AG04450 (cell line): ENCODE measurements at regions of chr14 and their contacts with region 1.

Region 1: DNA sequence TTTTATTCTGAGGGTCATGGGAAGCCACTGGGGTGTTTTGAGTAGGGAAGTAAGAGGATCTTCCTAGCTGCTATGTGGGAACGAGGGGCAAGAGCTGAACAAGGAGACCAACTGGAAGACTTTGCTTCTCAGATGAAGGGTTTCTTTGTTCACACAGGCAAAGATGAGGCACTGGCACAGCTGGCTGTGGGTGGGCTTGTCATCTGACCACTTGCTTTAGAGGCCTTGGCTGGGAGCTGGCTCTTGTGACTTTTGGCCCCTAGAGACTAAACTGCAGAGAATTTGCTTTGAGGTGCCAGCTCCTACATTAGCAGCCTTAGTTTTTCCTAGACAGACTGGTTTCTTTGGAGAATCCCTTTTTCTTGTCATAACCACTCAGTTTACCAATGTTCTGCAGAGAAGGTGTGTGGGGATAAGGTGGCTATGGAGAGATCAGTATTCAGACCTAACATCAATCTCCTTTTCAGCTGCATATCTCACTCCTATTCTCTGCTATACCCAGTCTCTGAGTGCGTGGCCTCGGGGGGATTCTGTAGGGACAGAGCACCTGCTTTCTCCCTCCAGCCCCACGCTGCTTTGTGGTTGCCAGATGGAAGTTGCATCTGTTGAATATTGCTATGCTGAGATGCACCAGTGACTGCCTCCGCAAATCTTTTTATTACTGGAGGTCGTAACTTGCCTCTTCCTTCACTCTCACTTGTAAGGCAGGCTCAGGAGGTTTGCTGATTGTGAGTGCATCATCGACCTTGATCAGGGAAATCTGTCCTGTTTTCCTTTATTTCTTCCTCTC is 12.7 kb downstream of the PPP2R5C start:
- DNase-seq: no peak
- H3K4me3 ChIP-seq: no peak overlapping the region
- H3K27ac ChIP-seq: no peak overlapping the region
- H3K27me3 ChIP-seq: peaks cover 5% of the 10 kb centered on the region
- CTCF ChIP-seq: no peak

Region 2: DNA sequence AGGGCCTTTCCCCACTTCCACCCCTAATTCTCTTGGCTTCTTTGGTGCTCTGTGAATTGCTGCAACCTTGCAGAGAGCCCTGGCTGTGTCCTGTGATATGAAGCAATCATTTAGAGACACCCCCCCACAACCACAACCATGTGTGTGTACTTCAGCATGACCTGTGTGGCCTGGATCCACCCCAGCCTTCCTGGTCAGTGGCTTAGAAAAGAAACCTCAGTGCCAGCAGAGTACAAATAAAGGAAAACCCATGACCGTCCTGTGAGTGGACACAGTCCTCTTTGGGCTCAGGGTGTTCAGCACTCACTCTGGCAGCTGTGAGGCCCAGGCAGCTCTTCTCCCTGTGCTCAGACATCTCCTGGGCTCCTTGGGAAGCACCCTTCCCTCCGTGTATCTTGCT is 419.5 kb before region 1 on chr14:
- CTCF ChIA-PET with region 1: no interaction called
- POLR2A ChIA-PET with region 1: no interaction called
- DNase-seq: no peak
- H3K4me3 ChIP-seq: no peak overlapping the region
- H3K27ac ChIP-seq: no peak overlapping the region
- H3K27me3 ChIP-seq: peaks cover 13% of the 10 kb centered on the region
- CTCF ChIP-seq: no peak

Region 3: DNA sequence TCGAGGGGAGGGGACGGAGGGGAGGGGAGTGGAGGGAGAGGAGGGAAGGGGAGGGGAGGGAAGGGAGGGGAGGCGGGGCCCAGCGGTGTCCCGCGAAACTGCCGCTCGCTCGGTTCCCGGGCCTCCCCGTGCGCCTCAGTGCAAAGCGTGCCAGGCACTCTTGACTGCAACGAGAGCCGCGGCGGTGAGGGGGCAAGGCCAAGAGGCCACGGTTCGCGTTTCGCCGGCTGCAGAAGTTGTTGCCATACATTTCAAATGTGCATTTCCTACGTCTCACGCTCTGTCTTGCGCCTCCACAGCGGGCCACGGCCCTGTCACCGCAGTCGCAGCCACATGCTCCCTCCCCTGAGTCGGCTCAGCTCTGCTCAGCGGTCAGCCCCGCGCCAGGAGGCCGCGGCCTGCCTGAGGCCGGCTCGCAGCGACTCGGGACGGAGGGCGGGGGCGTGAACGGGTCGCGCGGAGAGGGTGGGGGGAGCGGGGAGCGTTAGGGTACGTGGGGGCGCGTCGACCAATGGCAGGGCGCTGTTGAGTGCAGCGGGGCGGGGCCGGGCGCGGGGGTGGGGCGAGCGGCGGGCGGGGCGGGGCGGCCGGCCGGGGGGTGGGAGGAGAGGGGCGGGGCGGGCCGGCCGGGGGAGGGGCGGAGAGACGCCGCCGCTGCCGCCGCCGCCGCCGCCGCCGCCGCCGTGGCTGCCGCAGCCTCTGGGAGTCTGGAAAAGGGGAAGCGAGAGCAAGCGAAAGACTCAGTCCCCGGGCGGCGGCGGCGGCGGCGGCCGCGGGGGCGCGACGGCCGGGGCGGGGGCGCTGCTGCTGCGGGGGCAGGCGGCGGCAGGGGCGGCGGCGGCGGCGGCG is 12.9 kb before region 1 on chr14 and contains the start of gene PPP2R5C:
- CTCF ChIA-PET with region 1: interaction called, 13 read pairs
- POLR2A ChIA-PET with region 1: no interaction called
- DNase-seq: peak; percentile 68
- H3K4me3 ChIP-seq: peak within 1 kb of the TSS; percentile 97
- H3K27ac ChIP-seq: peak within 1 kb of the TSS; percentile 65
- H3K27me3 ChIP-seq: peaks cover 7% of the 10 kb centered on the region
- CTCF ChIP-seq: no peak
- polyA plus RNA-seq, gene PPP2R5C: 108 and 140 TPM in 2 replicates

Region 4: GRCh38 chr14:101791919-101792572 is 17.8 kb after region 1 on chr14:
- CTCF ChIA-PET with region 1: interaction called, 21 read pairs
- POLR2A ChIA-PET with region 1: no interaction called
- DNase-seq: peak; percentile 27
- H3K4me3 ChIP-seq: peak overlapping the region; percentile 33
- H3K27ac ChIP-seq: no peak overlapping the region
- H3K27me3 ChIP-seq: no peaks in the 10 kb centered on the region
- CTCF ChIP-seq: no peak

Region 5: DNA sequence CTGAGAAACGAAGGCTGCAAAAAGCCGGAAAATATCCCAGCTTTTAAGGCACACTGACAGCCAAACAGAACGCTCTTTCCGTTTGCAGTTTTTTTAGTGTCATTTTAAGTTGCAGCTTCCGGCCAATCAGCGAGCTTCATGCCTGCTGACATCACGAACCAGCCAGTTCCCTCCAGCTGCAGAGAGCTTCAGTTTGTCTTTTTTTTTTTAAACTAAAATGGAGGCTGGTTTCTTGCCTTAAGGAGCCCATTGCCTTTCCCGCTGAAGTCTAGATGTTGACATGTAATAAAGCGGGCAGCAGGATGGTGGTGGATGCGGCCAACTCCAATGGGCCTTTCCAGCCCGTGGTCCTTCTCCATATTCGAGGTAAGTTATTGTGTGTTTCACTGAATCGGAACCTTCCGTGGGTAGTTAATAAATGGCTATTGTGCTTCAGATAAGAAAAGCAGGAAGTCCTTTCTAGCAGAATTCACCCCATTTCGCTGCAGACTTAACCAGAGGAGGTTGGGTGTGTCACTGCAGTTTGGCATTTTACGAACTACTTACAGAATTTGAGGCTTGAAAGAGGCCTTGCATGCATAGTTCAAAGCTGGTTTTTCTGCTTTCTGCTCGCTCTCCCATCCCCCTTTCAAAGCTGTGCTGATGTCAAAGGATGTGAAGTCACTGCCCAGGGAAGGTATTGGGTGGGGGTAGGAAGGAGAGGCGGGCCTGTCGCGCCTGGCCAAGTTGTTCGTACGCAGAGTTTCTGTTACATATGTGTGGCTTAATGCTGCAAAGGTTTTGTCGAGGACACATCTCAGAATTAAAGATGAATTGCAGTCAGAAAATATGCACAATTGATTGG is 35.7 kb after region 1 on chr14:
- CTCF ChIA-PET with region 1: interaction called, 7 read pairs
- POLR2A ChIA-PET with region 1: interaction called, 12 read pairs
- DNase-seq: peak; percentile 79
- H3K4me3 ChIP-seq: peak overlapping the region; percentile 88
- H3K27ac ChIP-seq: peak overlapping the region; percentile 99
- H3K27me3 ChIP-seq: no peaks in the 10 kb centered on the region
- CTCF ChIP-seq: no peak

Region 6: DNA sequence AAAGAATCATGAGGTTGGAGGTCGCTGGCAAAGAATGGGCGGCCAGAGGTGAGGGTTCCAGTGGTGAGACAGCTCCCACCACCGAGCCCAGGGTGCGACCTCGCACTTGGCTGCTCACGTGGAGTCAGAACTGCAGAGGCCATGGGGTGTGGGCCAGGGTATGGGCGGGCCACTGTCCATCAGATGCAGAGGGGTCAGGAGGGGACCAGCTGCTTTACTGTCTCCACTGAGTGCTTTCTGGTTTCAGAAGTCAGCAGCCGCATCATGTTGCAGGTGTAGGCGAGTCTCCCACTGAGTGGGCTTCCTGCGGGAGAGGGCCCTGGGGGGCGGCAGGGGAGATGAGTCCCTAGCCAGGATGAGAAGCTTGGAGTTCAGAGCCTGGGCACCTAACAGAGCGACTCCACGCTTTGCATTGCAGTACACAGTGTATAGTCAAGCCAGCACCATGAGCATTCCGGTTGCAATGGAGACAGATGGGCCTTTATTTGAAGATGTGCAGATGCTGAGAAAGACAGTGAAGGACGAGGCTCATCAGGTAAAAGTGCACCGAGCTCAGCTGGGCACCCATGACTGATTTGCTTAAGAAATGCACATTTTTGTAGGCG is 143.3 kb after region 1 on chr14:
- CTCF ChIA-PET with region 1: interaction called, 14 read pairs
- POLR2A ChIA-PET with region 1: no interaction called
- DNase-seq: no peak
- H3K4me3 ChIP-seq: no peak overlapping the region
- H3K27ac ChIP-seq: peak overlapping the region; percentile 21
- H3K27me3 ChIP-seq: no peaks in the 10 kb centered on the region
- CTCF ChIP-seq: no peak

Region 7: DNA sequence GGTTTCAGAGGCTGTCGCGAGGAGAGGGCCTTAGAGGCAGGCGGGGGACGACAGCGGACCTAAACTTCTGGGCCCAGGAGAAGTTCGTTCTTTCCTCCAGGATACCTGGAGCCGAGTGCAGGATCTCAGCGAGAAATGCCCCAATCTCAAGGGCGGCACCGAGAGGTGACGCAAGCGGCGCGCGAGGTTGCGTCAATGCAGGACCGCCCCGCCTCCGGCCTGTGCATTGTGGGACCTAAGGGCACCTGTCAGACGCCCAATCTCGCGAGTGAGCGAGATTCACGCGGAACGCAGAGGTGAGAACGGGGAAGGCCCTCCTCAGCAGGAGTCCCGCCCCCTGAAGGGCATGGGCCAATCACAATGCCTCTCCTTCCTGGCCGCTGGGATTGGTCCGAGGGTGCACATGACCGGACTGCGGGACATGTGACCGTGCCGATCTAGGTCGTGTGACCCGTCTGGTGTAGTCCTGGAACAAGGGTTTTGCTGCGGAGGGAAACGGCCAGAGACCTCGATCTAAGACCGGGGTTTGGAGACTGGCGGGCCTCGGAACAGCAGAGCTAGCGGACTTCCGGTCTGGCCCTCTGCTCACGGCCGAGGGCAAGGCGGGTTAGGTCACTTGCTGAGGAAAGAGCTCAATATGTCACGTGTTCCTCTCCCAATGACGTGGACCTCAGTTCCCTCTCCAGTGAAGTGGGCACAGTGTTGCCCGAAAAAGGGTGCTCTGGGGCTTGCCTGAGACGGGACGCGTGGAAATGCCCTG is 173.9 kb after region 1 on chr14:
- CTCF ChIA-PET with region 1: interaction called, 11 read pairs
- POLR2A ChIA-PET with region 1: interaction called, 3 read pairs
- DNase-seq: peak; percentile 100
- H3K4me3 ChIP-seq: peak overlapping the region; percentile 98
- H3K27ac ChIP-seq: peak overlapping the region; percentile 99
- H3K27me3 ChIP-seq: peaks cover 10% of the 10 kb centered on the region
- CTCF ChIP-seq: no peak

Region 8: DNA sequence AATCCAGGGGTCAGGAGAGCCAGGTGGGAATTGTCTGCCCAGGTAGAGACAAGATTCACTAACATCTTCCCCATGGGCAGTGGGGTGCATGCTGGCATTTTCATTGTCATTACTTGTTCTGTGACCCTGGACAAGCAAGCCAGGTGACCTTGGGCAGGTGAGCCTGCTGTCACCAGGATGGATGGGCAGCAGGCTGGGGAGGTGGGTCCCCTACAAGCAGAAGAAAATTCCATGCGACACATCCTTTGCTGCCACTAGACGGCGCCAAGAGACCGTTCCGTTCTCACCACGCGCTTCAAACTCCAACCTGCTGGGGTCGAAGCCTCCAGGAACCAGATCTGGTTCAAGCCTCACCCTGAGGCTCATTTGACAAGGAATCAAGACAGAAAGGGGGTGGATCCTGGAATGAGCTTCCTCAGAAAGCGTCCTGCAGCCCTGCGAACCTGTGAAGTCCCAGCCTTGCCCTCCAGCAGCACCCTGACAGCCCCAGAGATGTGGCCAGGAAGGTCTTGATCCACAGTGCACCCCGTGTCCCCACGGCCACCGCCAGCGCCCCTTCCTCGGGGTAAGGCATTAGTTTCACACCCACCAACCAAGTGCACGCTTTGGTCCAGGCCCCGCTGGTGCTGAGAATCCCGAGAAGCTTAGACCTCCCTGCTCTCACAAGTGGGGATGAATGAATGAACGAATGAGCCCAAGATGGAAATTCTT is 187.0 kb after region 1 on chr14:
- CTCF ChIA-PET with region 1: interaction called, 31 read pairs
- POLR2A ChIA-PET with region 1: no interaction called
- DNase-seq: peak; percentile 50
- H3K4me3 ChIP-seq: no peak overlapping the region
- H3K27ac ChIP-seq: no peak overlapping the region
- H3K27me3 ChIP-seq: no peaks in the 10 kb centered on the region
- CTCF ChIP-seq: peak; percentile 91